CD4-positive, alpha-beta memory T cell (primary cell): ENCODE measurements at regions of chr14 and their contacts with region 1.

Region 1: DNA sequence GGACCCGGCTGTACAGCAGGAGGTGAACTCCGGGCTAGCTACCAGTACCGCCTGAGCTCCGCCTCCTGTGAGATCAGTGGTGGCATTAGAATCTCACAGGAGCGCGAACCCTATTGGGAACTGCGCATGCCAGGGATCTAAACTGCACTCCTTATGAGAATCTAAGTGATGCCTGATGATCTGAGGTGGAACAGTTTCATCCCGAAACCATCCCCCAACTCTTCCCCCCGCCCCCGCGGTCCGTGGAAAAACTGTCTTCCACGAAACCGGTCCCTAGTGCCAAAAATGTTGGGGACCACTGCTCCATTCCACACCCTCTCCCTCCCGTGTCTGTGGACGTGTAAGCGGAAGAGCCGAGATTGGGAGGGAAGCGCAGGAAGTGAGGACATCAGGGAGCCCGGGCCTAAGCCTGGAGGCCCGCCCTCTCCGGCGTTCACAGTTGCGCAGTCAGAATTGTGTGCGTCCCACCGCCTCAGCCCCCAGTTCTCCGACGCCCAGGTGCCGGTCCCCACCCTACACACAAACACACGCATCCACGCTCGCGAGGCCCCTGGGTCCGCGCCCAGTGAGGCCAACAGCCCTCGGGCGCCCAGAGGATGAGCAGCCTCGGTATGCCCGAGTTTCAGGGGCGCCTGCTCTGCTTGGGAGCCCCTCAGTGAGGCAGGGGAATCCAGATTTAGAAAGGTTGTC is 1.8 kb upstream of the RNASE4 start:
- DNase-seq: peak; percentile 80 to 85 (median 82)
- H3K4me3 ChIP-seq: peak overlapping the region; percentile 75 to 88
- H3K4me3 Mint-ChIP-seq: no peak overlapping the region
- H3K27ac ChIP-seq: peak overlapping the region; percentile 91
- H3K27ac Mint-ChIP-seq: no peak overlapping the region
- H3K4me1 ChIP-seq: peaks cover 35% of the 10 kb centered on the region
- H3K4me1 Mint-ChIP-seq: peaks cover 9 to 23% (median 16%) of the 10 kb centered on the region in 4 donors
- H3K27me3 ChIP-seq: no peaks in the 10 kb centered on the region
- H3K27me3 Mint-ChIP-seq: peaks cover 0 to 8% of the 10 kb centered on the region in 2 donors

Region 2: DNA sequence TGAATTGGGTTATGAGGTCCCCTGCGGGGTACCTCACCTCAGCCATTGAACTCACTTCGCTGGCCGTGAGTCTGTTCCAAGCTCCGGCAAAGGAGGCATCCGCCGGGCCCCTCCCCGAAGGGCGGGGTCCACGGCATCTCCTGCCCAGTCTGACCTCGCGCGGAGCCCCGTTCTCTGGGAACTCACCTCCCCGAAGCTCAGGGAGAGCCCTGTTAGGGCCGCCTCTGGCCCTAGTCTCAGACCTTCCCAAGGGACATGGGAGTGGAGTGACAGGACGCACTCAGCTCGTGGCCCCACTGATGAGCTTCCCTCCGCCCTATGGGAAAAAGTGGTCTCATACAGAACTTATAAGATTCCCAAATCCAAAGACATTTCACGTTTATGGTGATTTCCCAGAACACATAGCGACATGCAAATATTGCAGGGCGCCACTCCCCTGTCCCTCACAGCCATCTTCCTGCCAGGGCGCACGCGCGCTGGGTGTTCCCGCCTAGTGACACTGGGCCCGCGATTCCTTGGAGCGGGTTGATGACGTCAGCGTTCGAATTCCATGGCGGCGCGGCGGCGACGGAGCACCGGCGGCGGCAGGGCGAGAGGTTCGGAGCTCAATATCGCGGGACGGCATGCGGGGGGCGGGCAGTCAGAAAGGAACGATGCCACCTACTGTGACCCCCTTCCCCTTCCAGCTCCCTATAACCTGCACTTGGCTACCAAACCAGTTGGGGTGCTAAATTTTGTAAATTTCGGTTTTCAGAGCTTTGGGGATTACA is 339.3 kb before region 1 on chr14 and contains the start of gene PARP2:
- CTCF ChIA-PET with region 1: interaction called, 11 read pairs
- POLR2A ChIA-PET with region 1: interaction called, 65 read pairs
- intact Hi-C with region 1: loop called (anchors 1 kb)
- DNase-seq: peak; percentile 93 to 96 (median 93)
- H3K4me3 ChIP-seq: peak within 1 kb of the TSS; percentile 67 to 71
- H3K4me3 Mint-ChIP-seq: peak within 1 kb of the TSS; percentile 92 to 99 (median 98)
- H3K27ac ChIP-seq: peak within 1 kb of the TSS; percentile 94
- H3K27ac Mint-ChIP-seq: peak within 1 kb of the TSS; percentile 97 to 100 (median 98)
- H3K4me1 ChIP-seq: peaks cover 7% of the 10 kb centered on the region
- H3K4me1 Mint-ChIP-seq: peaks cover 5 to 27% (median 10%) of the 10 kb centered on the region in 4 donors
- H3K27me3 ChIP-seq: no peaks in the 10 kb centered on the region
- H3K27me3 Mint-ChIP-seq: no peaks in the 10 kb centered on the region
- total RNA-seq, gene PARP2: 20.3 to 25.0 TPM

Region 3: DNA sequence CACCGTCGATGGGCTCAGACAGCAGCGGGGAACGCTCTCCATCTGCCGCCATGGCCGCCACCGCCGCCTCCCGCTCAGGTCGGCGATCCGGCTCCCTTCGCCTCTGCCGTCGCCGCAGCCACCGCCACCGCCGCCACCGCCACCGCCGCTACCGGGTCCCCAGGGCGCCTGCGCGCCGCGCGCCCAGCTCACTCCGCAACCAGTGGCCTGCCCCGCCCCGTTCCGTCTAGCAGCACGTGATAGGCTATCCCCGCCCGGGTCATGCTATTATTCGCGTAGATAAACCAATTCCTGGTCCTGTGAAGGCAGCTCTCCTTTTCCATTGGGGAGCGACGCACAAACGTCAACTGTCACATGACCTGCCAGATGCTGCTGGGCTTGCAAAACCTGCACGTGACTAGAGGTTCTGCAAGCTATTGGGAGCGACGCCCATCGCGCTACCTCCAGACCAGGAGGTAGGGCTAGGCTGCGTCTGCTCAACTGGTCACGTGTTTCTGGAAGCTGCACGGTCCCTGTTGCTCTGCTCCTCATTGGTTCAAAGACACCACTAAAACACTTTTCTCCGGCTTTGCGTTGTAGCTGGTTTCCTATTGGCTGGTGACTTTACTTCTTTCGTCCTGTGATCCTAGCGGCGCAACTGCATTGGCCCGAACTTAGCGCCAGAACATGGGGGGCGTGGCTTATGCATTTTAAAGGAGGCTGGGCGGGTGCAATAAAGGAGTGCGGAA is 221.1 kb before region 1 on chr14 and contains the start of gene PIP4P1:
- CTCF ChIA-PET with region 1: interaction called, 3 read pairs
- POLR2A ChIA-PET with region 1: interaction called, 43 read pairs
- intact Hi-C with region 1: loop called (anchors 2 kb)
- DNase-seq: peak; percentile 98 to 100 (median 99)
- H3K4me3 ChIP-seq: peak within 1 kb of the TSS; percentile 64 to 76
- H3K4me3 Mint-ChIP-seq: peak within 1 kb of the TSS; percentile 89 to 96 (median 92)
- H3K27ac ChIP-seq: peak within 1 kb of the TSS; percentile 86
- H3K27ac Mint-ChIP-seq: peak within 1 kb of the TSS; percentile 92 to 99 (median 97)
- H3K4me1 ChIP-seq: peaks cover 39% of the 10 kb centered on the region
- H3K4me1 Mint-ChIP-seq: peaks cover 19 to 35% (median 23%) of the 10 kb centered on the region in 4 donors
- H3K27me3 ChIP-seq: no peaks in the 10 kb centered on the region
- H3K27me3 Mint-ChIP-seq: no peaks in the 10 kb centered on the region
- total RNA-seq, gene PIP4P1: 77.8 to 78.1 TPM

Region 4: GRCh38 chr14:20578325-20578724 is 104.3 kb before region 1 on chr14:
- CTCF ChIA-PET with region 1: no interaction called
- POLR2A ChIA-PET with region 1: no interaction called
- intact Hi-C with region 1: no loop called
- DNase-seq: no peak
- H3K4me3 ChIP-seq: no peak overlapping the region
- H3K4me3 Mint-ChIP-seq: no peak overlapping the region
- H3K27ac ChIP-seq: no peak overlapping the region
- H3K27ac Mint-ChIP-seq: no peak overlapping the region
- H3K4me1 ChIP-seq: no peaks in the 10 kb centered on the region
- H3K4me1 Mint-ChIP-seq: peaks cover 0 to 2% (median 0%) of the 10 kb centered on the region in 4 donors
- H3K27me3 ChIP-seq: no peaks in the 10 kb centered on the region
- H3K27me3 Mint-ChIP-seq: no peaks in the 10 kb centered on the region

Region 5: DNA sequence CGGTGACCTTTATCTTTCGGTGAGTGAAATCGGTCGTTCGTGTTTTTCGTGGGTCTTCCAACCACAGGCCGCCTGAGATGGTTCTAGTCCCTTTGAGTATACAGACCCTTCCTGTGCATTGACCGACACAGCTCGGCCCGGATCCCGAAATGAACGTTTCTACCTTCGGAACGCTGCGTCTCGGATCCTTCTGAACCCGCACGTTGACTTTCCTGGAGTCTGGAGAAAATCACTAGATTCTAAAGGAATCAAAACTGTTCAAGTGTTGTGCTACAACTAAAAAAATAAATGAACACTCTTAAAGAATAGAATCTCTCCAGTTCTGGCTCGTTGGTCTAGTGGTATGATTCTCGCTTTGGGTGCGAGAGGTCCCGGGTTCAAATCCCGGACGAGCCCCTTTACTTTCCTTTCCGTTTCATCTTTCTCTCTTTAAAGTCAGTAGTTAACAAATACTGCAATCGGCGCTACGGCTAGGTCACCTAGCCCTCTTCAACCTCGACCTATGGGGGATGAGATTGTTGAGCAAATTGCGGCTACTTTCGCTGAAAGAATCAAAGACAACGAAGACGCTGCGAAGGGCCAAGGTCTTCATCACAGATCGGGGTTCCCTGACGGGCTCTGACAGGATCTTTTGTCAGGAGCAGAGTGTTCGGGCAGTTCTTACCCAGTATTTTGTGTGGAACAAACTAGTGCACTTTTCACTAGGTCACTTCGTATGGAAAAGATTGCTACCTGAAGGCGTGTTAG is 49.7 kb before region 1 on chr14:
- CTCF ChIA-PET with region 1: no interaction called
- POLR2A ChIA-PET with region 1: interaction called, 61 read pairs
- intact Hi-C with region 1: loop called (anchors 1 kb)
- DNase-seq: peak; percentile 55 to 77 (median 71)
- H3K4me3 ChIP-seq: peak overlapping the region; percentile 34 to 51
- H3K4me3 Mint-ChIP-seq: peak overlapping the region; percentile 82 to 93 (median 90)
- H3K27ac ChIP-seq: no peak overlapping the region
- H3K27ac Mint-ChIP-seq: peak overlapping the region in 6 of 7 donors; percentile 79 to 99 (median 88)
- H3K4me1 ChIP-seq: peaks cover 37% of the 10 kb centered on the region
- H3K4me1 Mint-ChIP-seq: peaks cover 34 to 55% (median 45%) of the 10 kb centered on the region in 4 donors
- H3K27me3 ChIP-seq: peaks cover 20% of the 10 kb centered on the region
- H3K27me3 Mint-ChIP-seq: peaks cover 24 to 28% of the 10 kb centered on the region in 2 donors

Region 6: DNA sequence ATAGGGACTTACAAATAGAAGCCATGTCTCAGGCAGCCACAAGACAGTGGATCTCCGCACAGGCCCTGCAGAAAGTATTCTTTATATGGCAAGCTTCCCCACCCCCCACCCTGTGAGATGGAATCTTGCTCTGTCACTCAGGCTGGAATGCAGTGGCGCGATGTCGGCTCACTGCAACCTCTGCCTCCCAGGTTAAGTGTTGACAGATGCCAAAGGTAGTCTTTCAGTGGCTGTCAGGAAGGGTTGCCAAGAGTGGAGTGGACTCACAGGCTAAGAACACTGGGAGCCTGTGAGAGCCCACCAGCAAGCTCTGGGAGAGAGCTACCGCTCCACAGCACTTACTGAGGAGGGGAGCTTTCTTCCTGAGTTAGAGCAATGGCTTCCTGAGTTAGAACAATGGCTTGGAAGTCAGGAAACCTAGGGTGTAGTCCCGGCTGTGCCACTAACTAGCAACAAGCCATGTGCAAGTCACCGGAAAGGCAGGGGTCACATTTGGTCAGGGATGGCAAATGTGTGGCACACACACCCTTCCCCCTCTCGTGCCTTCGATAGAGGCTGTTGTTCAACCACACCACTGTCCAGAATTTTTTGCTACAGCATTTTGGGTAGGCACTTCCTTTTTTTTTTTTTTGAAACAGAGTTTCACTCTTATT is 117.4 kb after region 1 on chr14:
- CTCF ChIA-PET with region 1: no interaction called
- POLR2A ChIA-PET with region 1: no interaction called
- intact Hi-C with region 1: no loop called
- DNase-seq: no peak
- H3K4me3 ChIP-seq: no peak overlapping the region
- H3K4me3 Mint-ChIP-seq: no peak overlapping the region
- H3K27ac ChIP-seq: no peak overlapping the region
- H3K27ac Mint-ChIP-seq: no peak overlapping the region
- H3K4me1 ChIP-seq: no peaks in the 10 kb centered on the region
- H3K4me1 Mint-ChIP-seq: peaks cover 0 to 5% (median 3%) of the 10 kb centered on the region in 4 donors
- H3K27me3 ChIP-seq: no peaks in the 10 kb centered on the region
- H3K27me3 Mint-ChIP-seq: peaks cover 3 to 11% of the 10 kb centered on the region in 2 donors

Region 7: DNA sequence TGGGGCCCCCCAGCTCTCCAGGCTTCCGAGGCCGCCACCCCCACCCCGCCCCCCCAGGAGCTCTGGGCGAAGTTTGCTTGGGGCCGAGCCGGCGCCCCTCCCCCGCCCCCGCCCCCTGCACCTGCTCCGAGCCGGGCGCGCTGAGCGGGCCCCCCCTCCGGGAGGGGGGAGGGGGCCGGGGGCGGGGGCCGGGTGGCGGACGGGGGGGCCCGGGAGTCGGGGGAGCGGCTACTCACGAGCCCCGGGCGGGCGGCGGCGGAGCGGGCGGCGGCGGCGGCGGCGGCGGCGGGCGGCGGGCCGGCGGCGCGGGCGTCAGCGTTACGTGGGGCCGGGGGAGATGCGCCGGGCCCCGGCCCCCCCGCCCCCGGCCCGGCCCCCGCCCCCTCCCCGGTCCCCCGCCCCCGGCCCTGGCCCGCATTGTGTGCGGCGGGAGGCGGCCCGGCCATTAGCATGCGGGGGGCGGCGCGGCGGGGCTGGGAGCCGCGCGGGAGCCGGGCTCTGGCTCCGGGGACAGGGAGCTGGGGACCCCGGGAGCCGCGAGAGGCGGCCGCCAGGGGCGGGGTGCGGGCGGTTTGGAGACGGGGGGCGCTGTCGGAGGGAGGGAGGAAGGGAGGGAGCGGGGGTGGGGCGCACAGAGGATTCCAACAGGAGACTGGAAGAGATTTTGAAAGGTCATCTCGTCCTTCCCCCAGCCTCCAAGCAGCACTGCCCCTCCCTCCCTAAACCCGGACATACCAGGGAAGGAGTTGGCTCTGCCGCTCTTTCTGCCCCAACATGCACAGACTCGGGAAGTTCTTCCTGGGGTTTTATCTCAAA is 415.7 kb after region 1 on chr14 and contains the start of gene ZNF219:
- CTCF ChIA-PET with region 1: no interaction called
- POLR2A ChIA-PET with region 1: interaction called, 7 read pairs
- intact Hi-C with region 1: loop called (anchors 5 kb)
- DNase-seq: peak; percentile 31 to 54 (median 42)
- H3K4me3 ChIP-seq: peak within 1 kb of the TSS; percentile 38 to 47
- H3K4me3 Mint-ChIP-seq: peak within 1 kb of the TSS; percentile 80 to 95 (median 87)
- H3K27ac ChIP-seq: peak within 1 kb of the TSS; percentile 59
- H3K27ac Mint-ChIP-seq: peak within 1 kb of the TSS; percentile 93 to 95 (median 93)
- H3K4me1 ChIP-seq: peaks cover 24% of the 10 kb centered on the region
- H3K4me1 Mint-ChIP-seq: peaks cover 10 to 45% (median 16%) of the 10 kb centered on the region in 4 donors
- H3K27me3 ChIP-seq: no peaks in the 10 kb centered on the region
- H3K27me3 Mint-ChIP-seq: no peaks in the 10 kb centered on the region
- total RNA-seq, gene ZNF219: 7.6 to 8.0 TPM